ENCODE measurements at regions of chr3 and their contacts with region 1.

Region 1: GRCh38 chr3:10417849-10418248 is 87.5 kb downstream of the ATP2B2 start:
- DNase-seq: no peak
- H3K4me3 ChIP-seq: no peak overlapping the region
- H3K27ac ChIP-seq: no peak overlapping the region
- H3K4me1 ChIP-seq: no peaks in the 10 kb centered on the region
- H3K27me3 ChIP-seq: no peaks in the 10 kb centered on the region
- CTCF ChIP-seq: peak; percentile 8 to 48

Region 2: DNA sequence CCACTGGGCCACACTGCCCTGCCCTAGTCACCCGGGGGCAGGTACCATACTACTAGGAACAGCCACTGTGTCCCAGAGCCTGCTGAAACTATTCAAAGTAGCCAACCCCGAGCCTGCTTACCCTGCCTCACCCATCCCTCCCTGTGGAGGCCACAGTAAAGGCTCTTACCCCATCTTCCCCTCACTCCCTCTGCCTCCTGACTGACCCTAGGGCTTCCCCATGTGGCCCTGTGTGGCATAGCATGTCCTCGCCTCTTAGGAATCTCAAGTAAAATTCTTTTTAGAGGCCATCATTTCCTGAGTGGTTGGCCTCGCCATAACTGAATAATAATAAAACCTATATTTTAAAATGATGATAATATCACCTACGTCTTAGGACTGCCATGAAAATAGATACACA is 286.0 kb after region 1 on chr3:
- CTCF ChIA-PET with region 1: no interaction called
- dilution Hi-C with region 1: no loop called
- in situ Hi-C with region 1: no loop called
- intact Hi-C with region 1: loop called (anchors 5 kb)
- DNase-seq: peak; percentile 33
- H3K4me3 ChIP-seq: no peak overlapping the region
- H3K27ac ChIP-seq: no peak overlapping the region
- H3K4me1 ChIP-seq: no peaks in the 10 kb centered on the region
- H3K27me3 ChIP-seq: peaks cover 20% of the 10 kb centered on the region
- CTCF ChIP-seq: peak; percentile 63 to 69

Region 3: DNA sequence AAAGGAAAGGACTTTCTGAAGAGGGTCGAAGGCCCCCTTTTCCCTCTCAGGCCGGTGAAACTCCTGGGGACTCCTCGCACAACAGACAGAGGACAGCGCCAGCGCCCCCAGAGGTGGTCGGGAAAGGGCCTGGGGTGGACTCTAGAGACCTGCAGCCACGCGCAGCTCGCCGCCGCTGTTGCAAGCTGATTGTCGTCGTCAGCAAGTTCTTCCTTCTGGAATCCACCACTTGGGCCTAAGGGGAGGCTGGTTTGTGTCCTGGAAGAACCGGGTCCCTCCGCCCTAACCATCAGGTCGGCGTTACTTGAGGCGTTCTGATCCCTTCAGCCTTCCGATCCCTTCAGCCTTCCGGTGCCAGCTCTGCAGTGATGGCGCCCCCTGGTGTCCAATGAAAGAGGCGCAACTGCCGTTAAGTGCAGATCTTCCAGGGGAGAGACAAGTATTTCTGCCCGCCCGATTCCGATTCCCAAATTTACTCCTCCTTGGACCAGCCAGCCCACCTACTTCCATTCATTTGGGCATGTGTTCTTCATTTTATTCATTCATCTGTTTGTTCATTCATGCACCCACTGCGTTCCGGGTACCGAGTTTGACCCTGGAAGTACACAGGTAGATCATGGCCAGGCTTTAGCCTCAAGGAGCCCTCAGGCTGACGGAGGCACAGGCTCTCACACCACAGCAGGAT is 321.0 kb after region 1 on chr3:
- CTCF ChIA-PET with region 1: no interaction called
- dilution Hi-C with region 1: no loop called
- in situ Hi-C with region 1: loop called in 1 of 2 experiments (anchors 25 kb)
- intact Hi-C with region 1: loop called (anchors 1 kb)
- DNase-seq: peak; percentile 51
- H3K4me3 ChIP-seq: no peak overlapping the region
- H3K27ac ChIP-seq: no peak overlapping the region
- H3K4me1 ChIP-seq: no peaks in the 10 kb centered on the region
- H3K27me3 ChIP-seq: peaks cover 6% of the 10 kb centered on the region
- CTCF ChIP-seq: peak; percentile 91 to 94